CD8-positive, alpha-beta T cell (primary cell): ENCODE measurements at regions of chr2 and their contacts with region 1.

Region 1: GRCh38 chr2:98487806-98488651 is 43.4 kb downstream of the INPP4A start:
- DNase-seq: peak in 7 of 9 experiments; percentile 31 to 78 (median 64)
- ATAC-seq: peak; percentile 86
- H3K4me3 ChIP-seq: no peak overlapping the region
- H3K4me3 Mint-ChIP-seq: peak overlapping the region; percentile 47
- H3K27ac ChIP-seq: no peak overlapping the region
- H3K27ac Mint-ChIP-seq: peak overlapping the region; percentile 84
- H3K4me1 ChIP-seq: peaks cover 95% of the 10 kb centered on the region
- H3K4me1 Mint-ChIP-seq: peaks cover 97% of the 10 kb centered on the region
- H3K27me3 ChIP-seq: no peaks in the 10 kb centered on the region
- H3K27me3 Mint-ChIP-seq: no peaks in the 10 kb centered on the region
- CTCF ChIP-seq: peak; percentile 71

Region 2: GRCh38 chr2:98455494-98455976 is 32.5 kb before region 1 on chr2:
- CTCF ChIA-PET with region 1: interaction called, 15 read pairs
- POLR2A ChIA-PET with region 1: interaction called, 4 read pairs
- intact Hi-C with region 1: no loop called
- DNase-seq: peak in 4 of 9 experiments; percentile 39 to 84 (median 60)
- ATAC-seq: peak; percentile 56
- H3K4me3 ChIP-seq: no peak overlapping the region
- H3K4me3 Mint-ChIP-seq: peak overlapping the region; percentile 56
- H3K27ac ChIP-seq: peak overlapping the region; percentile 63 to 76
- H3K27ac Mint-ChIP-seq: peak overlapping the region; percentile 92
- H3K4me1 ChIP-seq: peaks cover 98% of the 10 kb centered on the region
- H3K4me1 Mint-ChIP-seq: peaks cover 94% of the 10 kb centered on the region
- H3K27me3 ChIP-seq: no peaks in the 10 kb centered on the region
- H3K27me3 Mint-ChIP-seq: no peaks in the 10 kb centered on the region
- CTCF ChIP-seq: no peak

Region 3: DNA sequence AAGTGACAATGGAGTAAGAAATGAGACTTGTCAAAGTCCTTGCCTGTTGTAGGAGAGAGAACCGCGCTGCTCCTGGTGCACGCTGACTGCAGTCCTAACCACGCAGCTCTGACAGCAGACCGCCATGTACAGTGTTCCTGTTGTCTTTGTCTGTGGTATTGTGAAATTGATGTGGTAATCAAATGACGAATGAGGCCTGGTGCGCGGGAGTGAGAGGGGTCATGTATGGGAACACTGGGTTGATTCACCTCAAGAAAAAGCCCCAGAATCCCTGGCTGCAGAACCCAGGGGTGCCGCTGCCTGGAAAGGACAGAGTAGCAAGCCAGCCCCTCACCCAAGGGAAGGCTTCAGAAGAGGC is 20.7 kb after region 1 on chr2:
- CTCF ChIA-PET with region 1: interaction called, 4 read pairs
- POLR2A ChIA-PET with region 1: interaction called, 5 read pairs
- intact Hi-C with region 1: loop called in 1 of 2 experiments (anchors 2 kb)
- DNase-seq: peak in 8 of 9 experiments; percentile 21 to 83 (median 56)
- ATAC-seq: peak; percentile 88
- H3K4me3 ChIP-seq: no peak overlapping the region
- H3K4me3 Mint-ChIP-seq: peak overlapping the region; percentile 35
- H3K27ac ChIP-seq: no peak overlapping the region
- H3K27ac Mint-ChIP-seq: peak overlapping the region; percentile 85
- H3K4me1 ChIP-seq: peaks cover 83% of the 10 kb centered on the region
- H3K4me1 Mint-ChIP-seq: peaks cover 97% of the 10 kb centered on the region
- H3K27me3 ChIP-seq: no peaks in the 10 kb centered on the region
- H3K27me3 Mint-ChIP-seq: no peaks in the 10 kb centered on the region
- CTCF ChIP-seq: no peak